Calu3 (cell line): ENCODE measurements at regions of chr7 and their contacts with region 1.

Region 1: GRCh38 chr7:2451171-2452073 is 24.8 kb downstream of the GRIFIN start:
- DNase-seq: peak; percentile 99
- H3K4me3 Mint-ChIP-seq: peak overlapping the region; percentile 50
- H3K27ac Mint-ChIP-seq: peak overlapping the region; percentile 53
- H3K4me1 Mint-ChIP-seq: peaks cover 13% of the 10 kb centered on the region
- H3K27me3 Mint-ChIP-seq: no peaks in the 10 kb centered on the region
- CTCF ChIP-seq: peak; percentile 99

Region 2: GRCh38 chr7:2373124-2373556 is 78.3 kb before region 1 on chr7:
- CTCF ChIA-PET with region 1: no interaction called
- intact Hi-C with region 1: no loop called
- DNase-seq: no peak
- H3K4me3 Mint-ChIP-seq: no peak overlapping the region
- H3K27ac Mint-ChIP-seq: no peak overlapping the region
- H3K4me1 Mint-ChIP-seq: no peaks in the 10 kb centered on the region
- H3K27me3 Mint-ChIP-seq: no peaks in the 10 kb centered on the region
- CTCF ChIP-seq: no peak

Region 3: DNA sequence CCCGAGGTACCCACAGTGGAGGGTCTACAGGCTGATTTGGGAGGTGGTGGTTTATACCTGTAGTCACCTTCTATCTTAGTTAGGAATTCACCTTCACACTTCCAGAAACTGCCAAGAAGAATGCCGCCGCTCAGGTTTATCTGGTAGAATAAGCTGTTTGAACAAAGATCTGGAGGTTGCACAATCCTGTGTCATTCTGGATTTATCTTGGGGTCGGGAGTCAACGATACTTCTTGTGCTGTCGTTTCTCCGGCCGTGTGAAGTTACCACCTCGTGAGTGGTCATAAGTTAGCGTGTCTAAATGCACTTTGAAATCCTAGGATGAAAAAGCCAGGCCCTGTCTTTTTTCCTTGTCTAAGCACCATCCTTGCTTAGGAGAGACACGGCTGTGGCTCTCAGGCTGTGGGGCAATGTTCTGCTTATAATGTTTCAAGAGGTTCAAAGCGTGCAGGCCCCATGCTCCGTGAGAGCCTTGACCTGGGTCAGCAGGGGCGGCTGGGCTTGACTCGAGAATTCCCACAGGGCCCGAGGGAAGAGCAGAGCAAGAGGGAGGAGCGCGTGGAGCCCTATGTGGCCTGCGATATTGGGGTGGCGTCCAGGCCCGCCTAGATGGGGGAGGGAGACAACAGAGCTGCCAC is 10.7 kb before region 1 on chr7:
- CTCF ChIA-PET with region 1: interaction called, 12 read pairs
- intact Hi-C with region 1: no loop called
- DNase-seq: peak; percentile 75
- H3K4me3 Mint-ChIP-seq: peak overlapping the region; percentile 14
- H3K27ac Mint-ChIP-seq: no peak overlapping the region
- H3K4me1 Mint-ChIP-seq: peaks cover 17% of the 10 kb centered on the region
- H3K27me3 Mint-ChIP-seq: no peaks in the 10 kb centered on the region
- CTCF ChIP-seq: no peak

Region 4: DNA sequence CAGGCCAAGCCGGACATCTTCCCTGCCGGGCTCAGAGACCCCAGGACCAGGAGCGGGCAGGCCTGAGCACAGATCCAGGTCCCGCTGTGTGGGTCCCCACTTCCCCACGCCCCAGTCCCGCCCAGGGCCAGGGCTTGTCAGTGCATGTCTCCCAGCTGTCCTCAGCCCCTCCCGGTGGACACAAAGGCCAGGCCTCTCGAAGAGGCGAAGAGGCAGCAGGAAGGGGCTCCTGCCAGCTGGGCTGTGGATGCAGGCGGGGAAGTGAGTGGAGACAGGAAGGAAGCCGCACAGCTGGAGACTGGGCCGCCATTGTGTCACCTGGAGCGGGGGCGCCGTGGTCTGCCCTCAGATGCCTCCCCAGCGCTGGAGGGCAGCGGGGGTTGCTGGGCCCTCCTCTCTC is 20.0 kb after region 1 on chr7:
- CTCF ChIA-PET with region 1: interaction called, 69 read pairs
- intact Hi-C with region 1: loop called (anchors 1 kb)
- DNase-seq: no peak
- H3K4me3 Mint-ChIP-seq: no peak overlapping the region
- H3K27ac Mint-ChIP-seq: no peak overlapping the region
- H3K4me1 Mint-ChIP-seq: peaks cover 20% of the 10 kb centered on the region
- H3K27me3 Mint-ChIP-seq: peaks cover 24% of the 10 kb centered on the region
- CTCF ChIP-seq: no peak

Region 5: DNA sequence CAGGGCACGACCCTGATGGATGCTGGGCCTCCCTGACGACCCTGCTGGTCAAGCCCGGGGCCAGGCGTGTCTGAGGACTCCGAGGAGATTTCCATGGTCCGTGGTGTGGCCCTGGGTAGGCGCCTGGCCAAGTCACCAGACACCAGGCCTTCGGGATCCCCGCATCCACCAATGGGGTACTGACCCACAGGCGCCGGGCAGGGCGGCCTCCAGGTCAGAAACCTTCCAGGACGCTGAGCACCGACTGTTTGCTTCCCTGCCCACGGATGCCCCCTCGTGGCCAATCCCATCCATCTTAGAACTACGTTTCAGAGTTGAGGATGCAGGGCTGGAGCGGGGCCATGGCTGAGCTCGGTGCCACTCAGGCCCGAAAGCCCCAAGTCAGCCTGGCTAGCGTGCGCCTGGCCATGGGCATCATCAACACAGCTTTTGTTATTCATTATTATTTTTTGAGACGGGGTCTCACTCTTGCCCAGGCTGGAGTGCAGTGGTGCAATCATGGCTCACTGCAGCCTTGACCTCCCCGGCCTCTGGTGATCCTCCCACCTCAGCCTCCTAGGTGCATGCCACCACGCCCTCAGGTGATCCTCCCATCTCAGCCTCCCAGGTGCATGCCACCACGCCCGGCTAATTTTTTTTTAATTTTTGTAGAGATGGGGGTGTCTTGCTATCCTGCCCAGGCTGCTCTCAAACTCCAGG is 229.5 kb after region 1 on chr7:
- CTCF ChIA-PET with region 1: interaction called, 30 read pairs
- intact Hi-C with region 1: loop called (anchors 2 kb)
- DNase-seq: peak; percentile 95
- H3K4me3 Mint-ChIP-seq: no peak overlapping the region
- H3K27ac Mint-ChIP-seq: no peak overlapping the region
- H3K4me1 Mint-ChIP-seq: peaks cover 9% of the 10 kb centered on the region
- H3K27me3 Mint-ChIP-seq: peaks cover 63% of the 10 kb centered on the region
- CTCF ChIP-seq: peak; percentile 94

Region 6: GRCh38 chr7:2709553-2710285 is 258.3 kb after region 1 on chr7:
- CTCF ChIA-PET with region 1: interaction called, 26 read pairs
- intact Hi-C with region 1: no loop called
- DNase-seq: peak; percentile 92
- H3K4me3 Mint-ChIP-seq: peak overlapping the region; percentile 59
- H3K27ac Mint-ChIP-seq: peak overlapping the region; percentile 39
- H3K4me1 Mint-ChIP-seq: peaks cover 10% of the 10 kb centered on the region
- H3K27me3 Mint-ChIP-seq: no peaks in the 10 kb centered on the region
- CTCF ChIP-seq: peak; percentile 98